ENCODE measurements at regions of chr14 and their contacts with region 1.

Region 1: DNA sequence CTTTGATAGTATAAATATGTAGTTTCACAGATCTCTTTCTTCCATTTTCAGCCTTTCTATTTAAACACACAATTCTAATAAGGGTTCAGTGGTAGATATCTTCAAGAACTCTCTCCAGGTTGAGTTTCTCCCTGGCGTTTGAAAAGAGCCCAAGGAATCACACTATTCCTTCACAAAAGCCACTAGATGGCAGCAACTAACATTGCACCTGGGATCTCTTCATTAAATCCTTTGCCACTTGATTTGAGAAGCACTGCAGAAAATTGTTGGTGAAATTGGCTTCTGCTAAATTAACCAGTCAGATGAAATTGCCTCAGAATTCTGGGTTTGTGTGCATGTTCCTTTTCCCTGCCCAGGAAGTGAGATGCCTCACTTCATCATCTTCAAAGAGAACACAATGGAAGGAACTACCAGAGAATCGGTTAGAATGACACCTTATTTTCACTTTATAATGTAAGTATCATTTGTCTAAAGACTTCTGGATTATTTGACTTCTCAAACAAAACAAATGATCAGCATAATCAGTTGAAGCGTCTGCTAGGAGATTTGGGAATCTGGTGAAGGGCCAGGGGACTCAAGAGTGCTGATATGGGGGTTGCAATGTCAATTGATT is 6.8 kb downstream of the CCDC198 start:
- DNase-seq: peak; percentile 32
- H3K4me3 ChIP-seq: no peak overlapping the region
- H3K27ac ChIP-seq: no peak overlapping the region
- H3K4me1 ChIP-seq: no peaks in the 10 kb centered on the region
- H3K27me3 ChIP-seq: no peaks in the 10 kb centered on the region
- CTCF ChIP-seq: peak; percentile 69 to 74

Region 2: DNA sequence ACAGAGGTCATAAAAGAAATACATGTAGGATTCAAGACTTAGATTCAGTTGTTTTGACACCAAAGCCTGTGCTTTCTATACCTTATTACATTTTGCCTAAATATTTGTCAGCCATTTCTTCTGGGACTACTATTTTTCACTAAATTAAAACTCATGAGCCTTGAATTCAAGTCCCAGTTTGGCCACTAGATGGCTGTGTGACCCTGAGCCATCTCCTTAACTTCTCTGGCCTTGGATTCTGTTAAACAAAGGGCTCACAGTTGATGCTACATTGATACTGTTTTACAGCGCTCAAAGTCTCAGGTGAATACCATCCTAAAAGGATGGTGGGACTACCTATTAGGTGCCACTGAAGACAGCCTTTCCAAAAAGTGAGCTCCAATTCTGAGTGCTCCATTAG is 46.3 kb after region 1 on chr14:
- CTCF ChIA-PET with region 1: no interaction called
- dilution Hi-C with region 1: no loop called
- in situ Hi-C with region 1: no loop called
- intact Hi-C with region 1: no loop called
- DNase-seq: no peak
- H3K4me3 ChIP-seq: no peak overlapping the region
- H3K27ac ChIP-seq: no peak overlapping the region
- H3K4me1 ChIP-seq: no peaks in the 10 kb centered on the region
- H3K27me3 ChIP-seq: no peaks in the 10 kb centered on the region
- CTCF ChIP-seq: peak; percentile 44 to 47

Region 3: DNA sequence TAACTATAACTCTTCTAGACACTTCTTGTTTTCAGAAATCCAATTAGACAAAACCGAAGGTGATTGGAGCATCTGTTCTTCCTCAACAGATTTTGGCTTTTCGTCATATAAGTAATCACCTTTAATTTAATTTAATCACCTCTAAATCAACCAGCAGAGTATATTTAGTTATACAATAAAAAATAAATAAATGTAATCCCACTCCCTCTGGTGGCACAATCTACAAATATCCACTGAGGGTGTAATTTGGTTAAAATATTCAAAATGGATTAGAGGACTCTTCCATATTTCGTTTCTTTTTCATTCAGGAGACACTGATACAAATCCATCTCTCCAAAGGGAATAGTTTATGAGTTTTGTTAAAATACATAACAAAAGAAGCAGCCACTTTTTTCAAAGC is 397.3 kb after region 1 on chr14:
- CTCF ChIA-PET with region 1: no interaction called
- dilution Hi-C with region 1: no loop called
- in situ Hi-C with region 1: no loop called
- intact Hi-C with region 1: loop called (anchors 2 kb)
- DNase-seq: no peak
- H3K4me3 ChIP-seq: no peak overlapping the region
- H3K27ac ChIP-seq: no peak overlapping the region
- H3K4me1 ChIP-seq: no peaks in the 10 kb centered on the region
- H3K27me3 ChIP-seq: no peaks in the 10 kb centered on the region
- CTCF ChIP-seq: peak in 1 of 2 donors; percentile 30

Region 4: GRCh38 chr14:58060077-58060476 is 573.2 kb after region 1 on chr14:
- CTCF ChIA-PET with region 1: no interaction called
- dilution Hi-C with region 1: no loop called
- in situ Hi-C with region 1: loop called (anchors 10 kb)
- intact Hi-C with region 1: no loop called
- DNase-seq: peak; percentile 28
- H3K4me3 ChIP-seq: no peak overlapping the region
- H3K27ac ChIP-seq: no peak overlapping the region
- H3K4me1 ChIP-seq: no peaks in the 10 kb centered on the region
- H3K27me3 ChIP-seq: no peaks in the 10 kb centered on the region
- CTCF ChIP-seq: no peak

Measured in mammary epithelial cell (primary cell).